OCI-LY7 (cell line): ENCODE measurements at regions of chr7 and their contacts with region 1.

Region 1: DNA sequence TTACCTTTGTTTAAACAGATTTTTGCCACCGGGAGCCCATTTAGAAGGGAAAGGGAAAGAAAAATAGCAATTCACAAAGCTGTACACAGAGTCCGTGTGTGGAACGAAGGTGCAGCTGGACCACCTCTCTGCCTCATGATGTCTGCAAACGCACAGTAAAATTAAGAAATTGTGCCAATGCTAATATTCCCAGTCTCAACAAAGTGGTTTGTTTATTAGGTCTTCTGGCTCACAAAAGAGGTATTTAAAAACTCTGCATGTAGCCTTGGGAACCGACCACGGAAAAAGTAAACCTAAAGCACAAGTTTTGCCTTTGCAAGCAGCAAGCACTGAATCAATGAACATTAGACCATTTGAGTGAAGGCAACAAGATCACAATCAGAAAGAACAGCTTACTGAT is 57.7 kb downstream of the CREB3L2 start:
- DNase-seq: no peak
- H3K4me3 ChIP-seq: no peak overlapping the region
- H3K27ac ChIP-seq: no peak overlapping the region
- H3K4me1 ChIP-seq: no peaks in the 10 kb centered on the region
- CTCF ChIP-seq: no peak

Region 2: DNA sequence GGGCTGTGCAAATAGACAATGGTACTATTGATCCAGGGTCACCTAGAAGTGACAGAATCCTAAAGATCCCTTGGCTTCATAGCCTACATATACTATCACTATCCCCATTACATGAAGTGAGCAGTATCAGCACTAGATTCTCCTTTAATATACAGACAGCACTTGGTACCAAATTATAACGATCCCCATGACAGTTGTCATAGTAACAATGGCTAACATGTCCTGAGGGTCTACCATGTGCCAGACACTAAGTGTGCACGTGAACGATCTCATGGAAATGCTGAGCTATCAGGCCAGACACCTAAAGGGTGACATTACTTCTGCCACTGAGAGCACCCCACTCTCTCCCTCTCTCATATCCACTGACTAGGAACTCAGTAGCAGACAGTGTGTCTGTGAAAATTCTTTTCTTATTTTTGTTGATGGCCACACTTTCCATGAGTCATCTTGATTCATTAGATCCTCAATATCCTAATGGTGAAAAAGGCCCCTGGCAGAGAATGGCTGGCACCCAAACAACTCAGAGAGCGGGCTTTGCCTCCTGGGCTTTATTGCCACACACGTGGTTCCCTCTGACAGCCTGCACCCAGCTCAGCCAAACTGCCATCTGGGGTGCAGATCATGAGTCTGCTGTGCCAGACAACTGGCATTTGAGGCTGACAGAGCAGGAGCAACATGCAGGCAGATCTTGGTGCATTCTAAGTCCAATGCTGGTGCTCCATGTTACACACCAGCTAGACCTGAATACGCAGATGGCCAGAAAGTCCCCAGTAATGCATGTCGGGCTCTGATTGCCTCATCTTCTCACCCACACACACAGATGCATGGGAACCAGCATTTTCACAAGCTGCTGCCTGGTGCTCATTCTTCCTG is 273.7 kb before region 1 on chr7:
- CTCF ChIA-PET with region 1: no interaction called
- POLR2A ChIA-PET with region 1: no interaction called
- intact Hi-C with region 1: no loop called
- DNase-seq: no peak
- H3K4me3 ChIP-seq: no peak overlapping the region
- H3K27ac ChIP-seq: no peak overlapping the region
- H3K4me1 ChIP-seq: no peaks in the 10 kb centered on the region
- CTCF ChIP-seq: no peak

Region 3: GRCh38 chr7:137715533-137715932 is 228.6 kb before region 1 on chr7:
- CTCF ChIA-PET with region 1: no interaction called
- POLR2A ChIA-PET with region 1: no interaction called
- intact Hi-C with region 1: no loop called
- DNase-seq: no peak
- H3K4me3 ChIP-seq: no peak overlapping the region
- H3K27ac ChIP-seq: no peak overlapping the region
- H3K4me1 ChIP-seq: no peaks in the 10 kb centered on the region
- CTCF ChIP-seq: no peak

Region 4: DNA sequence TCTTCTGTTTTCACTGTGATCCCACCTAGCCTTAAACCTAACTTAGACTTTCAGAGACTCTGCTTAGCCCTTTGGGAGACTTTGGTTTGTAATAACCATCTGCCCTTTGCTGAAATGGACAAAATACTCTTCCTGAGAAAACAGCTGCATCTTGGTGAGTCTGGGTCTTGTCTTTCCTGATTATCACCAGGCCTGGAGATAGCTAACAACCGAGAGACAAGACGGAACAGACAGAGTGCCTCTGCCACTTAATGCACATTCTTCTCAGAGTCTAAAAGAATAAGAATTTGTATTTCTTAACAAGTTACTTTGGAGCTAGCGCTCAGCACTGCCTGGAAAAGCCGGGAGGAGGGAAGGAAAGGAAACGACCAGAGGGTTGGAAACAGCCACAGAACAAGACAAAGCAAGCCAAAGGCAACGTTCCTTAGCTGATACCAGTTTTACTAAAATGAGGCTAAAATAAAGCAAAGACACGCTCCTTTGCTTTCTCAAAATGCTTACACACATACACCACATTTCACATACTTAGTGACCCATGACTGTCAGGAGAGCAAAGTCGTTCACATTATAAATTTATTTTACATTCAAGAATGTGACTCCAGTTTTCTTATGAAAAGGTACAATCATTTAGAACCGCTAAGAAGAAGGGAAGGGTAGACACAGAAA is 27.1 kb before region 1 on chr7:
- CTCF ChIA-PET with region 1: no interaction called
- POLR2A ChIA-PET with region 1: no interaction called
- intact Hi-C with region 1: loop called (anchors 1 kb)
- DNase-seq: no peak
- H3K4me3 ChIP-seq: no peak overlapping the region
- H3K27ac ChIP-seq: no peak overlapping the region
- H3K4me1 ChIP-seq: no peaks in the 10 kb centered on the region
- CTCF ChIP-seq: no peak